ENCODE measurements at regions of chr1 and their contacts with region 1.

Region 1: DNA sequence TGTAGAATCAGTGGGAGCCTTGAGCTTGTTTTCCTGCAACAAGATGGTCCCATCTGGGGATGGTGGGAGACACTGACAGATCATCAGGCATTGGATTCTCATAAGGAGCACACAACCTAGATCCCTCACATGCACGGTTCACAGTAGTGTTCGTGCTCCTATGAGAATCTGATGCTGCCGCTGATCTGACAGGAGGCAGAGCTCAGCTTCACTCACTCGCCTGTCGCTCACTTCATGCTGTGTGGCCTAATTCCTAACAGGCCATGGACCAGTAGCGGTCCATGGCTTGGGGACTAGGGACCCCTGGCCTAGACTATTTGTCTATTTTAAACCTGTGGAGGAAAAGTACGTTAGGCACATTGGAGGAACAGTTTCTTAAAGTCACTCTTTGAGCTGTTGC is 140.0 kb downstream of the EDEM3 start:
- DNase-seq: no peak
- H3K4me3 ChIP-seq: no peak overlapping the region
- H3K27ac ChIP-seq: no peak overlapping the region
- H3K4me1 ChIP-seq: no peaks in the 10 kb centered on the region
- H3K27me3 ChIP-seq: no peaks in the 10 kb centered on the region
- CTCF ChIP-seq: no peak
- POLR2A ChIP-seq: no peak

Region 2: GRCh38 chr1:184494929-184495328 is 119.7 kb before region 1 on chr1:
- intact Hi-C with region 1: no loop called
- DNase-seq: no peak
- H3K4me3 ChIP-seq: no peak overlapping the region
- H3K27ac ChIP-seq: no peak overlapping the region
- H3K4me1 ChIP-seq: no peaks in the 10 kb centered on the region
- H3K27me3 ChIP-seq: no peaks in the 10 kb centered on the region
- CTCF ChIP-seq: no peak
- POLR2A ChIP-seq: no peak

Region 3: GRCh38 chr1:184632415-184633175 is 17.9 kb after region 1 on chr1:
- intact Hi-C with region 1: loop called (anchors 1 kb)
- DNase-seq: peak; percentile 80 to 89
- H3K4me3 ChIP-seq: no peak overlapping the region
- H3K27ac ChIP-seq: peak overlapping the region; percentile 83 to 94
- H3K4me1 ChIP-seq: peaks cover 3 to 5% of the 10 kb centered on the region in 2 donors
- H3K27me3 ChIP-seq: no peaks in the 10 kb centered on the region
- CTCF ChIP-seq: no peak
- POLR2A ChIP-seq: no peak

Measured in breast epithelium (tissue), 4 donors.